GM12878 (cell line): ENCODE measurements at regions of chr19 and their contacts with region 1.

Region 1: DNA sequence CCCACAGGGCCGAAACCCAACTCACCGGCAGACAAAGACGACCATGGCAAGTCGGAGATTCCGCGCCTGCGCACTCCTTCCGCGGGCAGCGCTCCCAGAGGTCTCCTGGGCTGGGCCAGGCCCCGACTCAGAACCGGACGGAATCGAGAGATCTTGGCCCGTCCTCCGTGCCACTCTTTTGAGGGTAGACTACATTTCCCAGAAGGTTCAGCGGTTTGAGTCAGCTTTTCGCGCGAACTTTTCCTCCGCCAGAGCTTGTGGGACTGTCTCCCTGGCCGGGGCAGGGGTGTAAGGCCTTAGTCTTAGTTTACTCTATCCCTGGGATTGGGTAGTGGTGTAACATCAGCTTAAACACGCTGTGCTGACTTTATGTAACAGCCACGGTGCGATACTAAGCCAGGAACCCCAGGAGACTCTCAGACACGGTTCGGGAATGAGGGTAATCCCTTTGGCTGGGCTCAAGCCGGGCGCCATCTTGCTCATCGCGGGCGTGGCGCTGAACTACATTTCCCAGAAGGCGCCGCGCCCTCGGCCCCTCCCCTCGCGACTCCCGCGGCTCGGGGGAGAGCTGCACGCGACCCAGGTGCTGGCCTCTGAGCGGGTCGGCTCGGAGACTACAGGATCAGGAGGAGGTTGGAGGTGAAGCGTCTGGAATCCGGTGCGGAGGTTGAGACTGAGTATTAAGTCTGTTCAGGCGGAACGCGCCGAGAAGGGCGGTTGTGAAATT is at the start of gene ZNF260:
- DNase-seq: peak; percentile 79
- ATAC-seq: peak; percentile 93
- H3K4me3 ChIP-seq: peak within 1 kb of the TSS; percentile 76
- H3K27ac ChIP-seq: peak within 1 kb of the TSS; percentile 83
- H3K4me1 ChIP-seq: no peaks in the 10 kb centered on the region
- H3K27me3 ChIP-seq: no peaks in the 10 kb centered on the region
- CTCF ChIP-seq: no peak
- EP300 ChIP-seq: peak in 1 of 2 experiments; percentile 18; a peak in 1 of 4 replicates
- POLR2A ChIP-seq: peak; percentile 80
- RAD21 ChIP-seq: no peak
- polyA plus RNA-seq, gene ZNF260: 1.9 to 3.5 TPM

Region 2: DNA sequence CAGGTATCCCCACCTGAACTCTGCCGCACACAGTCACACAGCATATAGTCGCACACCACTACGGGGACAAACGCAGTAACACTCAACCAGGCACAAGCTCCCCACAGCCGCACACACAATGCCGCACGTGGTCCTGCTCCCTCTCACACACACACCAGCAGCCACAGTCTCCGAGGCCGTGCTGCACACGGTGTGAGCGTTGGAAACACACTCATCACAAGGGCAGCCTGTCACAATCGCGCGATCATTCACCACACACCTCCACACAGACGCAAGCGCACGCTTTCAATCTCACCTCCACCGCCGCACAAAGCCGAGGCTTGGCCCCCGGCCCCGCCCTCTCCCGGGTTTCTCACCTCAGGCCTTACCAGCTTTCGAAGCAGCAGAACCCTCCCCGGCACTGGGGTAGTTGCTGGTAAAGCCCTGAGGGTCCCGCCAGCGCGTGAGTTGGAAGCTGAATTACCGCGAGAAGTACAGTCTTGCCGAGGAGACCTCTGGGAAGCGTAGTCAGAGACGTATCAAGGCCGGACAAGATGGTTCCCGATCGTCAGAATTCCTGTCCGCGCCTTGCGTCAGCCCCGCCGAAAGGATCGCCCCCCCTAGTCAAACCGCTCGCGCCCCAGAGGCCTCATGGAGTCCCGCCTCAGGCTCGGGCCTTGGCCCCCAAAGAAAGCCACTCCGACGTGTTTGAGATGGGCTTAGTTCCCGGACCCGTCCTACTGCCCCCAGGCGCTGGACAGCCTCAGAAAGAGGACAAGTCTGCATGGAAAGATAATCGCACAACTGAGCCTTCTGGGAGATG is 39.0 kb before region 1 on chr19 and contains the start of gene ZNF566:
- CTCF ChIA-PET with region 1: interaction called, 6 read pairs
- POLR2A ChIA-PET with region 1: interaction called, 5 read pairs
- RAD21 ChIA-PET with region 1: no interaction called
- SMC1A ChIA-PET with region 1: interaction called, 3 read pairs
- in situ Hi-C with region 1: no loop called
- intact Hi-C with region 1: loop called (anchors 5 kb)
- DNase-seq: peak; percentile 92
- ATAC-seq: peak; percentile 96
- H3K4me3 ChIP-seq: peak within 1 kb of the TSS; percentile 79
- H3K27ac ChIP-seq: peak within 1 kb of the TSS; percentile 93
- H3K4me1 ChIP-seq: no peaks in the 10 kb centered on the region; the same call in 1 of the 2 replicates
- H3K27me3 ChIP-seq: no peaks in the 10 kb centered on the region
- CTCF ChIP-seq: no peak
- EP300 ChIP-seq: no peak
- POLR2A ChIP-seq: peak; percentile 78
- RAD21 ChIP-seq: no peak
- polyA plus RNA-seq, gene ZNF566: 2.5 to 4.0 TPM

Region 3: DNA sequence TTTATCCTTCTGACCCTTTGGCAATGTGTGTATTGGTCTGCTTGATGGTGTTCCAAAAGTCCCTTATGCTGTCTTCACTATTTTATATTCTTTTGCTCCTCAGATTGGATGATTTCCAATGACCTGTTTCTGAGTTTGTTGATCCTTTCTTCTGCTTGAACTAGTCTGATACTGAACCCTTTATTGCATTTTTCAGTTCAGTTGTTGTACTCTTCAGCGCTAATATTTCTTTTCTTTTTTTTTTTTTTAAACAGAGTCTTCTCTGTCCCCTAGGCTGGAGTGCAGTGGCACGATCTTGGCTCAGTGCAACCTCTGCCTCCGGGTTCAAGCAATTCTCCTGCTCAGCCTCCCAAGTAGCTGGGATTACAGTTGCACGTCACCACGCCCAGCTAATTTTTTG is 26.4 kb before region 1 on chr19:
- CTCF ChIA-PET with region 1: no interaction called
- POLR2A ChIA-PET with region 1: no interaction called
- RAD21 ChIA-PET with region 1: no interaction called
- SMC1A ChIA-PET with region 1: no interaction called
- in situ Hi-C with region 1: no loop called
- intact Hi-C with region 1: no loop called
- DNase-seq: no peak
- ATAC-seq: no peak
- H3K4me3 ChIP-seq: no peak overlapping the region
- H3K27ac ChIP-seq: no peak overlapping the region
- H3K4me1 ChIP-seq: no peaks in the 10 kb centered on the region
- H3K27me3 ChIP-seq: no peaks in the 10 kb centered on the region
- CTCF ChIP-seq: no peak
- EP300 ChIP-seq: no peak
- POLR2A ChIP-seq: no peak
- RAD21 ChIP-seq: no peak

Region 4: DNA sequence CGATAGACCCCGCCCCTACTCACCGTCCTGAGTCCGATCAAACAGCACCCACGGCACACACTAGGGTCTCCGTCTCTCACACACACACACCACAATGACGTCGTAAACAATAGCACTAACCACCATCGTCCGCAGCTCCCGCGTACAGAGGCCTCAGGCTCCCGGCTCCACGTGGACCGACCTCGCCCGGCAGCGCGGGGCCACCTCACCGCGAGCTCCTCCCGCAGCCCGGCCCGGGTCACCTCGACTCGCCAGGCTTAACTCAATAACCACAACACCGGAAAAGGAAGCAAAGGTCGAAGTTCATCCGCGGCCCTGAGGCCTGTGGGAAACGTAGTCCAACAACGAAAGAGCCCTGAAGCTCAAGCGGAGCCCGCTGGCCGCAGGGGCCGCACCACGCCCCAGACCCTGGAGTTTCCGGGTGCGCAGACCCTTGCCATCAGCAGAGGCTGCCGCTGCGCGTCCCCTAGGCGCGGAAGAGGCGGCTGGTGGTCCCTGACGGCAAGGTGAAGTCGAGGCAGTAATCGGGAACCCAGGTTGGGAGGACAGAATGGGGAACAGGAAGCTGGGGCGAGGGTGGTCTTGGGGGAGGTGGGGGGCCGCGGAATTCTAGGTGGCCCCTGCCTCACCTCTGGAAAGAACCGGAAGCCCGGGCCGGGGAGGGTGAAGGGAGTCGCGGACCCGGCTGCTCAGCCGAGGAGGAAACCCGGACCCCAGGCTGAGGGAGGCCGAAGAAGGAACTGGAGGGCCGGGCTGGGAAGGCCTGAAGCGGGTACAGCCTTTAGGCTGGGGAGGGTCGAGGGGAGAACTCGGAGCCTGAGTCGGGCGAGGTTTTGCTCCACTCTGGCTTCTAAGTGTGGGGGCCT is 44.9 kb after region 1 on chr19 and contains the start of gene ZNF529:
- CTCF ChIA-PET with region 1: no interaction called
- POLR2A ChIA-PET with region 1: interaction called, 9 read pairs
- RAD21 ChIA-PET with region 1: interaction called, 4 read pairs
- SMC1A ChIA-PET with region 1: interaction called, 5 read pairs
- in situ Hi-C with region 1: no loop called
- intact Hi-C with region 1: loop called (anchors 1 kb)
- DNase-seq: peak; percentile 74
- ATAC-seq: peak; percentile 97
- H3K4me3 ChIP-seq: peak within 1 kb of the TSS; percentile 91
- H3K27ac ChIP-seq: peak within 1 kb of the TSS; percentile 87
- H3K4me1 ChIP-seq: no peaks in the 10 kb centered on the region
- H3K27me3 ChIP-seq: no peaks in the 10 kb centered on the region
- CTCF ChIP-seq: no peak
- EP300 ChIP-seq: no peak
- POLR2A ChIP-seq: peak; percentile 96
- RAD21 ChIP-seq: no peak
- polyA plus RNA-seq, gene ZNF529: 1.8 to 2.7 TPM

Region 5: GRCh38 chr19:36687214-36688056 is 159.1 kb after region 1 on chr19 and contains the start of gene ZNF567:
- CTCF ChIA-PET with region 1: no interaction called
- POLR2A ChIA-PET with region 1: no interaction called
- RAD21 ChIA-PET with region 1: no interaction called
- SMC1A ChIA-PET with region 1: no interaction called
- in situ Hi-C with region 1: no loop called
- intact Hi-C with region 1: no loop called
- DNase-seq: peak; percentile 76
- ATAC-seq: peak; percentile 96
- H3K4me3 ChIP-seq: peak within 1 kb of the TSS; percentile 68
- H3K27ac ChIP-seq: peak within 1 kb of the TSS; percentile 79
- H3K4me1 ChIP-seq: no peaks in the 10 kb centered on the region
- H3K27me3 ChIP-seq: no peaks in the 10 kb centered on the region
- CTCF ChIP-seq: no peak
- EP300 ChIP-seq: no peak
- POLR2A ChIP-seq: peak; percentile 95
- RAD21 ChIP-seq: no peak
- polyA plus RNA-seq, gene ZNF567: 8.8 to 11.5 TPM